Naive thymus-derived CD4-positive, alpha-beta T cell (primary cell): ENCODE measurements at regions of chr6 and their contacts with region 1.

Region 1: DNA sequence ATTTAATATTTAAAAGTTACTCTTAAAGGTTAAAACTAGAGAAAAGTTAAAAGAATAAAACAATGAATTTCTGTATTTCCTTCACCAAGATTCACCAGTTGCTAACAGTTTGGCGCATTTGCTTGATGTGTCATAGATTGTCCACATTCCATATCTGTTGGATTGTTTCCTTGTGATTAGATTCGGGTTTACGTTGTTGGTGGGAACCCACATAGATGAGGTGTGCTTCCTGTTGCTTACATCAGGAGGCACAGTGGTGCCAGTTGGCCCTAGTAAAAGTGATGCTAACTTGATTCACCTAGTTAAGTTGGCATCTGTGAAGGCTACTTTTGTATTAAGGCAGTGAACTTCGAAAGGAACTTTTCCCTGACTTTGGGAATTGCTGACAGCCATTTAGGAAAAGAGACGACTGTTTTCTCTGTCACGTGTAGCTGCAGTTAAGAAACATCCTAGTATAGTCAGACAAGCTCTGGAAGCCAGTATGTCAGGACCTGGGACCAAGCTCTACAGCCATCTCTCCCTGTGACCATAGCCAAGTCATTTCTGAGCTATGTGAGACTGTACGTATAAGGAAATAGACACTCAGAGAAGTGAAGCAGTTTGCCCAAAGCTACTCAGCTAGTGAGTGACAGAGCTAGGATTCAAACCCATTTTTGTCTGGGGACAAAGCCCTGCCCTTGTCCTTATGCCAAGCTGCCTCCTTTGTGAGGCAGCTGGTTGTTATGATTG is 49.0 kb downstream of the PPARD start:
- DNase-seq: no peak
- ATAC-seq: peak; percentile 67
- H3K4me3 ChIP-seq: no peak overlapping the region
- H3K4me3 Mint-ChIP-seq: peak overlapping the region in 4 of 10 donors; percentile 14 to 52 (median 30)
- H3K27ac ChIP-seq: no peak overlapping the region
- H3K27ac Mint-ChIP-seq: peak overlapping the region in 8 of 9 donors; percentile 42 to 86 (median 70)
- H3K4me1 ChIP-seq: peaks cover 13 to 17% of the 10 kb centered on the region in 2 donors
- H3K4me1 Mint-ChIP-seq: peaks cover 33 to 76% (median 68%) of the 10 kb centered on the region in 7 donors
- H3K27me3 ChIP-seq: no peaks in the 10 kb centered on the region
- H3K27me3 Mint-ChIP-seq: no peaks in the 10 kb centered on the region

Region 2: GRCh38 chr6:35240840-35241801 is 150.3 kb before region 1 on chr6:
- CTCF ChIA-PET with region 1: no interaction called
- POLR2A ChIA-PET with region 1: no interaction called
- intact Hi-C with region 1: no loop called
- DNase-seq: peak; percentile 34 to 78 (median 62)
- ATAC-seq: peak; percentile 89
- H3K4me3 ChIP-seq: no peak overlapping the region
- H3K4me3 Mint-ChIP-seq: no peak overlapping the region
- H3K27ac ChIP-seq: no peak overlapping the region
- H3K27ac Mint-ChIP-seq: peak overlapping the region in 2 of 9 donors; percentile 10 to 65
- H3K4me1 ChIP-seq: no peaks in the 10 kb centered on the region
- H3K4me1 Mint-ChIP-seq: peaks cover 3 to 10% (median 4%) of the 10 kb centered on the region in 7 donors
- H3K27me3 ChIP-seq: no peaks in the 10 kb centered on the region
- H3K27me3 Mint-ChIP-seq: peaks cover 0 to 6% (median 0%) of the 10 kb centered on the region in 5 donors

Region 3: GRCh38 chr6:35359751-35360348 is 31.6 kb before region 1 on chr6:
- CTCF ChIA-PET with region 1: no interaction called
- POLR2A ChIA-PET with region 1: no interaction called
- intact Hi-C with region 1: loop called in 1 of 2 experiments (anchors 5 kb)
- DNase-seq: no peak
- ATAC-seq: no peak
- H3K4me3 ChIP-seq: no peak overlapping the region
- H3K4me3 Mint-ChIP-seq: peak overlapping the region in 1 of 10 donors; percentile 15
- H3K27ac ChIP-seq: no peak overlapping the region
- H3K27ac Mint-ChIP-seq: peak overlapping the region in 7 of 9 donors; percentile 30 to 87 (median 55)
- H3K4me1 ChIP-seq: peaks cover 0 to 21% of the 10 kb centered on the region in 2 donors
- H3K4me1 Mint-ChIP-seq: peaks cover 28 to 84% (median 70%) of the 10 kb centered on the region in 7 donors
- H3K27me3 ChIP-seq: no peaks in the 10 kb centered on the region
- H3K27me3 Mint-ChIP-seq: no peaks in the 10 kb centered on the region